GM12878 (cell line): ENCODE measurements at regions of chr3 and their contacts with region 1.

Region 1: GRCh38 chr3:119600732-119601131 is 3.0 kb downstream of the PLA1A start:
- DNase-seq: peak; percentile 85
- ATAC-seq: peak; percentile 81
- H3K4me3 ChIP-seq: no peak overlapping the region
- H3K27ac ChIP-seq: peak overlapping the region; percentile 87
- H3K4me1 ChIP-seq: peaks cover 62% of the 10 kb centered on the region
- H3K27me3 ChIP-seq: no peaks in the 10 kb centered on the region
- CTCF ChIP-seq: peak; percentile 88 to 96 (median 91); a peak in 5 of 6 replicates
- EP300 ChIP-seq: no peak
- POLR2A ChIP-seq: peak; percentile 66
- RAD21 ChIP-seq: peak; percentile 82

Region 2: DNA sequence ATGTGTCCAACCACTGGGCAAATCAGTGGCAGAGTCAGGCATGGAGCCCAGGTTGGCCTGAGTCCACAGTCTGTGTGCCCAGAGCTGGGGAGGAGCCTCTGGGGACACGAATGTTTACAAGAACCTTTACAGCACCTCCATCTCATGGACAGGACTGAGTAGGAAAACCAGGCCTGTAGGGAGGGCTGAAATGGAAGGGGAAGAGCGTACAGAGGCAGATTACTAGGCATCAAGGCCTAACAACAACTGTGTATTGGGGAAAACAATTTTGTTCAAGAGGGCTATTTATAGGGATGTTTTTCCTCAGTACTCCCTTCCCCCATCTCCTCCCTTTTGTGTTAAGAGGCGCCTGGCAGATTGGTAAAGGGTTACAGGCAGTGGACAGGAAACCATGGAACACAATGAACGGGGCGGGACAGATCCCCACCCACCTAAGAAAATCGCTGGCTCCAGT is 321.6 kb before region 1 on chr3:
- CTCF ChIA-PET with region 1: interaction called, 21 read pairs
- POLR2A ChIA-PET with region 1: no interaction called
- RAD21 ChIA-PET with region 1: interaction called, 5 read pairs
- SMC1A ChIA-PET with region 1: interaction called, 4 read pairs
- in situ Hi-C with region 1: no loop called
- intact Hi-C with region 1: no loop called
- DNase-seq: no peak
- ATAC-seq: no peak; the same call in 2 of the 3 replicates
- H3K4me3 ChIP-seq: no peak overlapping the region
- H3K27ac ChIP-seq: no peak overlapping the region
- H3K4me1 ChIP-seq: no peaks in the 10 kb centered on the region; the same call in 1 of the 2 replicates
- H3K27me3 ChIP-seq: no peaks in the 10 kb centered on the region
- CTCF ChIP-seq: no peak
- EP300 ChIP-seq: no peak
- POLR2A ChIP-seq: no peak
- RAD21 ChIP-seq: no peak

Region 3: GRCh38 chr3:119542168-119542767 is 58.5 kb before region 1 on chr3:
- CTCF ChIA-PET with region 1: interaction called, 8 read pairs
- POLR2A ChIA-PET with region 1: interaction called, 8 read pairs
- RAD21 ChIA-PET with region 1: interaction called, 27 read pairs
- SMC1A ChIA-PET with region 1: interaction called, 17 read pairs
- in situ Hi-C with region 1: no loop called
- intact Hi-C with region 1: no loop called
- DNase-seq: no peak
- ATAC-seq: peak; percentile 26
- H3K4me3 ChIP-seq: 0 out of 2 replicates have a peak overlapping the region, but pooled peaks have one; percentile 17
- H3K27ac ChIP-seq: peak overlapping the region; percentile 55
- H3K4me1 ChIP-seq: peaks cover 16% of the 10 kb centered on the region
- H3K27me3 ChIP-seq: no peaks in the 10 kb centered on the region
- CTCF ChIP-seq: no peak
- EP300 ChIP-seq: no peak
- POLR2A ChIP-seq: no peak
- RAD21 ChIP-seq: no peak

Region 4: DNA sequence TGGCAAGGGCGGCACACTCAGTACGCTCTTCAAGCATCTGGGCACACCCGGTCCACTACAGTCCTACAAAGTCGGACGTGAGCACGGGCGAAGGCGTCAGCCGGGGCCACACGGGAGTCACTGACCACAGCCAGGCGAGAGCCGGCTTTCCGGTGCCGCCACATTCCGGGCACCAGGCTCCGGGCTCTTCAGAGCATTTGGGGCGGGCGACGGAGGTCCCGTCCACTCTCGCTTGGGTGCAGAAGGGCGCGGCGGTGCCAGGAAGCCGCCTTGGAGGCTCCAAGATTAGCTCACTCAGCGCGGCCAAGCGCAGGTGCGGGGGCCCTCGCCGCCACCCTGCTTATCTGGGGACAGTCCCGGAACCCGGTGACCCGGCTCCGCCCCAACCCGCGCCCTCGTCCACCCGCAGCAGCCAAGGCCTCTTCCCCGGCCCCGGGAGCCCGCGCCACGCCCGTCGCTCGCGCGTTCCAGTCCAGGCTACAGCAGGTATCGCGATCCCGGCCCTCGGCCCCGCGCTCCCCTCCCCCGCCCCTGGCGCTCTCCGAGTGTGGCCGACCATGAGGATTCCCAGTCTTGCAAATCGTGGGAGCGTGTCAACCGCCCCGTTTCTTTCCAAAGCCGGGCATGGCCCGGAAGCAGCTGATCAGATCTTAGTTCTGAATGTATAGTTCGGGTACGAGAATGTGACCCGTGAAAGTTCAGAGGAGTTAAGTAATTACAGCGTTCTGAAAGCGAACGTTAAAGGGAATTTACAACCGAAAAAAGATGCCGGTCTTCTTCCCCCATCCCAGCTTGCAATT is 21.2 kb before region 1 on chr3 and contains the start of gene ADPRH:
- CTCF ChIA-PET with region 1: interaction called, 56 read pairs
- POLR2A ChIA-PET with region 1: interaction called, 133 read pairs
- RAD21 ChIA-PET with region 1: interaction called, 76 read pairs
- SMC1A ChIA-PET with region 1: interaction called, 62 read pairs
- in situ Hi-C with region 1: no loop called
- intact Hi-C with region 1: loop called (anchors 1 kb)
- DNase-seq: no peak
- ATAC-seq: peak; percentile 80
- H3K4me3 ChIP-seq: peak within 1 kb of the TSS; percentile 84
- H3K27ac ChIP-seq: peak within 1 kb of the TSS; percentile 97
- H3K4me1 ChIP-seq: peaks cover 17% of the 10 kb centered on the region
- H3K27me3 ChIP-seq: no peaks in the 10 kb centered on the region
- CTCF ChIP-seq: no peak
- EP300 ChIP-seq: no peak
- POLR2A ChIP-seq: peak; percentile 80
- RAD21 ChIP-seq: no peak
- polyA plus RNA-seq, gene ADPRH: 2.3 to 3.7 TPM

Region 5: DNA sequence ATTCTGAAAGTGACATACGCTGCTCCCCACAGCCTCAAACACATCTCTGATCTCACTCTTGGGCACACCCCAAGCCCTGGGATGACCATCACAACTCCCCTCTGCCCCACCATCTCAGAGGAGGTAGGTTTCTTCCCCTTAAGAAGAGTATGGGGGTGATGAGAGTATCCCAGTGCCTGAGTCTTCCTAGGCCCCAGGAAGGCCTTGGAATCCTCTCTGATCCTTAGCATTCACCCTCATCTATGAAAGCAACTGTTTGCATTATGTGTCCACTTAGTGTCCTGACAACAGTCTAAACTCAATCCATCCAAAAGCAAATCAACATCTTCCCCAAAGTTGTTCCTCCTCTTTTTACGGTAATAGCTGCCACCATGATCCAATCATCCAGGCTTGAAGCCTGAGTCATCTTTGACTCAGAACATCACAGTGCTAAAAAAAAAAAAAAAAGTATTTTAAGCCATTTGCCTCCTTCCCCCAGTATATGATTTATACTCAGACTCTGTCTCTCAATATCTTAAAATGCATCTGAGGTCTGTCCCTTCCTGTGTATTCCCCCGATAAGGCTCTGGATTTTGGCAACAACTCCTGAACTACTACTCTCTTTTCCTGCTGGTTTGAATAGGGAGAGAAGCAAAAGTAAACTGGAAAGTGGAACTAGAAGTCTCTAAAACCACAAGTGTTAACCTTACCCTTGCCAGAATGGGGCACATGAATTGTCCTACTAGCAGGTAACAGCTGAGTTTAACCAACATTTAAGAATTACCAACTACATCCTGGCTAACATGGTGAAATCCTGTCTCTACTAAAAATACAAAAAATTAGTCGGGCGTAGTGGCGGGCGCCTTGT is 37.2 kb after region 1 on chr3:
- CTCF ChIA-PET with region 1: interaction called, 43 read pairs
- POLR2A ChIA-PET with region 1: interaction called, 21 read pairs
- RAD21 ChIA-PET with region 1: interaction called, 53 read pairs
- SMC1A ChIA-PET with region 1: interaction called, 128 read pairs
- in situ Hi-C with region 1: no loop called
- intact Hi-C with region 1: loop called (anchors 1 kb)
- DNase-seq: peak; percentile 82
- ATAC-seq: peak; percentile 62
- H3K4me3 ChIP-seq: peak overlapping the region; percentile 21; the same call in 1 of the 2 replicates
- H3K27ac ChIP-seq: peak overlapping the region; percentile 96
- H3K4me1 ChIP-seq: peaks cover 37% of the 10 kb centered on the region
- H3K27me3 ChIP-seq: no peaks in the 10 kb centered on the region
- CTCF ChIP-seq: no peak
- EP300 ChIP-seq: peak; percentile 16 to 29; a peak in 1 of 4 replicates
- POLR2A ChIP-seq: no peak
- RAD21 ChIP-seq: no peak

Region 6: GRCh38 chr3:119695480-119695879 is 94.7 kb after region 1 on chr3:
- CTCF ChIA-PET with region 1: interaction called, 35 read pairs
- POLR2A ChIA-PET with region 1: interaction called, 5 read pairs
- RAD21 ChIA-PET with region 1: interaction called, 11 read pairs
- SMC1A ChIA-PET with region 1: interaction called, 18 read pairs
- in situ Hi-C with region 1: no loop called
- intact Hi-C with region 1: loop called (anchors 1 kb)
- DNase-seq: no peak
- ATAC-seq: no peak
- H3K4me3 ChIP-seq: no peak overlapping the region
- H3K27ac ChIP-seq: no peak overlapping the region
- H3K4me1 ChIP-seq: peaks cover 20% of the 10 kb centered on the region
- H3K27me3 ChIP-seq: no peaks in the 10 kb centered on the region
- CTCF ChIP-seq: no peak
- EP300 ChIP-seq: no peak
- POLR2A ChIP-seq: no peak
- RAD21 ChIP-seq: no peak

Region 7: GRCh38 chr3:119800841-119801240 is 200.1 kb after region 1 on chr3:
- CTCF ChIA-PET with region 1: no interaction called
- POLR2A ChIA-PET with region 1: no interaction called
- RAD21 ChIA-PET with region 1: no interaction called
- SMC1A ChIA-PET with region 1: no interaction called
- in situ Hi-C with region 1: no loop called
- intact Hi-C with region 1: no loop called
- DNase-seq: no peak
- ATAC-seq: no peak
- H3K4me3 ChIP-seq: no peak overlapping the region
- H3K27ac ChIP-seq: no peak overlapping the region
- H3K4me1 ChIP-seq: no peaks in the 10 kb centered on the region
- H3K27me3 ChIP-seq: no peaks in the 10 kb centered on the region
- CTCF ChIP-seq: no peak
- EP300 ChIP-seq: no peak
- POLR2A ChIP-seq: no peak
- RAD21 ChIP-seq: no peak